IMR-90 (cell line): ENCODE measurements at regions of chr7 and their contacts with region 1.

Region 1: GRCh38 chr7:119720541-119720940 is 552.4 kb upstream of the KCND2 start:
- DNase-seq: peak; percentile 84
- ATAC-seq: peak; percentile 54
- H3K4me3 ChIP-seq: no peak overlapping the region
- H3K27ac ChIP-seq: no peak overlapping the region
- H3K4me1 ChIP-seq: no peaks in the 10 kb centered on the region
- H3K27me3 ChIP-seq: no peaks in the 10 kb centered on the region
- CTCF ChIP-seq: no peak
- POLR2A ChIP-seq: no peak
- RAD21 ChIP-seq: no peak

Region 2: DNA sequence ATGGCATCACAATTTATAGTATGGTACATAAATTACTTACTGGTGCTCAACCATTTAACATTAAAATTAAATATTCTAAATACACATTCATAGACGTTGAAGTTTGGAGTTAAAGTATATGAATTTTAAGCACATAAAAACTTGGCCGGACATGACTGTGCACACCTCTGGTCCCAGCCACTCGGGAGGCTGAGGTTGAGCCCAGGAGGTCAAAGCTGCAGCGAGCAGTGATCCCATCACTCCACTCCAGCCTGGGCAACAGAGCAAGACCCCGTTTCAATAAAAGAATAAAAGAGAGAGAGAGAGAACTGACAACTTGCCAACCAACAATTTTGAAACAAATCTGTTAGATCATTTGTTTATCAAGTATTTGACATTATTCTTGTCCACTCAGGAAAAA is 390.8 kb before region 1 on chr7:
- CTCF ChIA-PET with region 1: no interaction called
- POLR2A ChIA-PET with region 1: no interaction called
- dilution Hi-C with region 1: no loop called
- in situ Hi-C with region 1: no loop called
- intact Hi-C with region 1: no loop called
- DNase-seq: no peak
- ATAC-seq: no peak
- H3K4me3 ChIP-seq: no peak overlapping the region
- H3K27ac ChIP-seq: no peak overlapping the region
- H3K4me1 ChIP-seq: no peaks in the 10 kb centered on the region
- H3K27me3 ChIP-seq: no peaks in the 10 kb centered on the region
- CTCF ChIP-seq: no peak
- POLR2A ChIP-seq: no peak
- RAD21 ChIP-seq: no peak

Region 3: GRCh38 chr7:119996634-119997033 is 276.1 kb after region 1 on chr7:
- CTCF ChIA-PET with region 1: no interaction called
- POLR2A ChIA-PET with region 1: no interaction called
- dilution Hi-C with region 1: no loop called
- in situ Hi-C with region 1: no loop called
- intact Hi-C with region 1: no loop called
- DNase-seq: peak; percentile 58
- ATAC-seq: peak; percentile 69
- H3K4me3 ChIP-seq: no peak overlapping the region
- H3K27ac ChIP-seq: no peak overlapping the region
- H3K4me1 ChIP-seq: no peaks in the 10 kb centered on the region
- H3K27me3 ChIP-seq: no peaks in the 10 kb centered on the region
- CTCF ChIP-seq: no peak
- POLR2A ChIP-seq: no peak
- RAD21 ChIP-seq: no peak

Region 4: GRCh38 chr7:120089968-120090367 is 369.4 kb after region 1 on chr7:
- CTCF ChIA-PET with region 1: no interaction called
- POLR2A ChIA-PET with region 1: no interaction called
- dilution Hi-C with region 1: no loop called
- in situ Hi-C with region 1: no loop called
- intact Hi-C with region 1: loop called (anchors 5 kb)
- DNase-seq: peak; percentile 42
- ATAC-seq: no peak
- H3K4me3 ChIP-seq: no peak overlapping the region
- H3K27ac ChIP-seq: no peak overlapping the region
- H3K4me1 ChIP-seq: no peaks in the 10 kb centered on the region
- H3K27me3 ChIP-seq: no peaks in the 10 kb centered on the region
- CTCF ChIP-seq: peak; percentile 37
- POLR2A ChIP-seq: no peak
- RAD21 ChIP-seq: peak; percentile 45